MCF 10A (cell line): ENCODE measurements at regions of chr14 and their contacts with region 1.

Region 1: DNA sequence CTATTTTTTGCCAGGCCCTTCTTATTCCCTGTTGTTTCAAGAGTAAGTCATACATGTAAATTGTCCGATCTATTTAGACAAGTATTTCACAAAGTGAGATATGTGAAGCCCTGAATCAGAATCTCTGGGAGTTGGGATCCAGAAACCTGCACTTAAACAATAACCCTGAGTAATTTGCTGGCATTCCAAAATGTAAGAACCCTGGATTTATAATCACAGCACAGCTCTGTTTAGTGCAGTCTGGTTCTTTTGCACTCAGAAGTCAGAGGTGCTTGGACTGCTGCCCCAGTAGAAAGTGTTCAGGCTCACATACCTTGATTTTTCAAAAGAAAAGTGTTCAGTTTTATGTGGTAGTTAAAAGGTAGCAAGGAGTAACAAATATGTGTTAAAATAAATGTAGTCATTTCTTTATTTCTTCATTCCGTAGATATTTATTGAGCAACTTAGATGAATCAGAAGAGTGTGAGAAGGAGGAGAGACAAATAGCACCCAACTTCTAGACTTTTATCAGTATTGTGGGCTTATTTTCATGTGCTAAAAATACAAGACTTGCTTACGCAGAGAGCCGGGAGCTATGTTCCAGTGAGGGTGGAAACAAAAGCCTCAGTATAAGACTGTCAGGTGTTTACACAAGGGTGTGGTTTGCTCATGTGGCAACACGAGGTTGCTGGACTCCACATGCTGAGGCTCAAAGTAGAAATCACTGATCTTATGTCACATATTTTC is 70.1 kb downstream of the SYNE2 start:
- DNase-seq: peak; percentile 96
- H3K4me3 Mint-ChIP-seq: peak overlapping the region; percentile 60
- H3K27ac Mint-ChIP-seq: no peak overlapping the region
- H3K4me1 Mint-ChIP-seq: peaks cover 13% of the 10 kb centered on the region
- H3K27me3 Mint-ChIP-seq: no peaks in the 10 kb centered on the region
- CTCF ChIP-seq: no peak

Region 2: DNA sequence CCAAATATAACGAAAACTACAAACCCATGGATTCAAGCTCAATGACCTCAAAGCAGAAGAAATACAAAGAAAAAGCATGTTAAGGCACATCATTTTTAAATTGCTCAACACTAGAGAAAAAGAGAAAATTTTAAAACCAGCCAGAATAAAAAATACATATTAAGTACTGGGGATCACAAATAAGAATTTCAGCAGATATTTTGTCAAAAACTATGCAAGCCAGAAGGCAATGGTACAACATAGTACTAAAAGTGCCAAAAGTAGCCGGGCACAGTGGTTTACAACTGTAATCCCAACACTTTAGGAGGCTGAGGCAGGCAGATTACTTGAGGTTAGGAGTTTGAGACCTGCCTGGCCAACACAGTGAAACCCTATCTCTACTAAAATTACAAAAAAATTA is 205.2 kb before region 1 on chr14:
- CTCF ChIA-PET with region 1: no interaction called
- POLR2A ChIA-PET with region 1: no interaction called
- intact Hi-C with region 1: no loop called
- DNase-seq: peak; percentile 13
- H3K4me3 Mint-ChIP-seq: no peak overlapping the region
- H3K27ac Mint-ChIP-seq: no peak overlapping the region
- H3K4me1 Mint-ChIP-seq: peaks cover 13% of the 10 kb centered on the region
- H3K27me3 Mint-ChIP-seq: no peaks in the 10 kb centered on the region
- CTCF ChIP-seq: no peak

Region 3: GRCh38 chr14:63852817-63853731 is 69.8 kb before region 1 on chr14 and contains the start of gene SYNE2:
- CTCF ChIA-PET with region 1: interaction called, 4 read pairs
- POLR2A ChIA-PET with region 1: interaction called, 67 read pairs
- intact Hi-C with region 1: loop called (anchors 1 kb)
- DNase-seq: peak; percentile 77
- H3K4me3 Mint-ChIP-seq: peak within 1 kb of the TSS; percentile 89
- H3K27ac Mint-ChIP-seq: peak within 1 kb of the TSS; percentile 86
- H3K4me1 Mint-ChIP-seq: peaks cover 25% of the 10 kb centered on the region
- H3K27me3 Mint-ChIP-seq: no peaks in the 10 kb centered on the region
- CTCF ChIP-seq: no peak
- total RNA-seq, gene SYNE2: 51.2 and 67.4 TPM in 2 replicates

Region 4: GRCh38 chr14:63867933-63868921 is 54.6 kb before region 1 on chr14:
- CTCF ChIA-PET with region 1: no interaction called
- POLR2A ChIA-PET with region 1: interaction called, 45 read pairs
- intact Hi-C with region 1: no loop called
- DNase-seq: no peak
- H3K4me3 Mint-ChIP-seq: no peak overlapping the region
- H3K27ac Mint-ChIP-seq: no peak overlapping the region
- H3K4me1 Mint-ChIP-seq: peaks cover 19% of the 10 kb centered on the region
- H3K27me3 Mint-ChIP-seq: no peaks in the 10 kb centered on the region
- CTCF ChIP-seq: no peak

Region 5: DNA sequence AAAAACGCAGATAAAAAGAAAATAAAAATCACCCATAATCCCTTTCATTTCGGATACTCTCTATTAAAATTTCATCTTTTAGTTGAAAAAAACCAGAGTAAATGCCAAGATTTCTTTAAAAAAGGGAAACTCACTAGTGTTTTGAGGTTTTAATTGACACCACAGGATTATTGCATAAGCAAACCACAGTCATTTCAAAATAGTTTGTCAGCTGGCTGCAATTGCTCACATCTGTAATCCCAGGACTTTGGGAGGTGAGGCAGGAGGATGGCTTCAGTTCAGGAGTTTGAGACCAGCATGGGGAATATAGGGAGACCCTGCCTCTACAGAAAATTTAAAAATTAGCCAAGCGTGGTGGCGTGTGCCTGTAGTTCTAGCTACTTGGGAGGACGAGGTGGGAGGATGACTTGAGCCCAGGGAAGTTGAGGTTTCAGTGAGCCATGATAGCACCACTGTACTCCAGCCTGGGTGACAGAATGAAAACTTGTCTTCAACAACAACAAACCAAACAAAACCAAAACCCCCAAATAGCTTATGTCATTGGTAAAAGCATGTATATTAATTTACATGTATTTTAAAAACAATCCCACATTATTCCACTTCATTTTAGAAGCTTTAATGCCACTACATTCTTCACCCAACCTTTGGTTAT is 21.3 kb before region 1 on chr14:
- CTCF ChIA-PET with region 1: interaction called, 4 read pairs
- POLR2A ChIA-PET with region 1: interaction called, 45 read pairs
- intact Hi-C with region 1: no loop called
- DNase-seq: peak; percentile 86
- H3K4me3 Mint-ChIP-seq: no peak overlapping the region
- H3K27ac Mint-ChIP-seq: no peak overlapping the region
- H3K4me1 Mint-ChIP-seq: peaks cover 24% of the 10 kb centered on the region
- H3K27me3 Mint-ChIP-seq: no peaks in the 10 kb centered on the region
- CTCF ChIP-seq: no peak

Region 6: DNA sequence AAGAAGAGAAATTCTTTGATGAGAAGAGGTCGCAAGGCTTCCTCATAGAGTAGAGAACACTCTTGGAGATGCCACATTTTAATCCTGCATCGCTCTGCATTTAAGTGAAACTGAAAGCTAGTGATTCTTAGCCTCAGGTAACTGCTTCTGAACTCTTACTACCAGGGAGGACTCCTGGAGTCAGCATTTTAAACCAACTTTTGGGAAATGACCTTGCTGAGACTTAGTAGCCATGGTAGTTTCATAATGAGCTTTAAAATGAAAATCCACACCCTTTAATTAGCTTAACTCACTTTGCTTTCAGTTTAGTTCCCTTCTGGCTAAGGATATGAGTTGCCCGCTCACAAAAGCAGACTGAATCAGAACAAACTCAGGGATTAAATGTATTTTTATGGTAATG is 10.3 kb after region 1 on chr14:
- CTCF ChIA-PET with region 1: interaction called, 5 read pairs
- POLR2A ChIA-PET with region 1: interaction called, 32 read pairs
- intact Hi-C with region 1: no loop called
- DNase-seq: no peak
- H3K4me3 Mint-ChIP-seq: no peak overlapping the region
- H3K27ac Mint-ChIP-seq: no peak overlapping the region
- H3K4me1 Mint-ChIP-seq: peaks cover 6% of the 10 kb centered on the region
- H3K27me3 Mint-ChIP-seq: no peaks in the 10 kb centered on the region
- CTCF ChIP-seq: no peak